Endothelial cell of umbilical vein (primary cell): ENCODE measurements at regions of chr3 and their contacts with region 1.

Region 1: GRCh38 chr3:13091898-13092611 is 18.8 kb upstream of the IQSEC1 start:
- DNase-seq: peak; percentile 72
- H3K4me3 ChIP-seq: no peak overlapping the region
- H3K27ac ChIP-seq: no peak overlapping the region
- H3K4me1 ChIP-seq: no peaks in the 10 kb centered on the region
- H3K27me3 ChIP-seq: peaks cover 3 to 6% of the 10 kb centered on the region in 2 experiments
- CTCF ChIP-seq: peak; percentile 66 to 95
- POLR2A ChIP-seq: no peak

Region 2: DNA sequence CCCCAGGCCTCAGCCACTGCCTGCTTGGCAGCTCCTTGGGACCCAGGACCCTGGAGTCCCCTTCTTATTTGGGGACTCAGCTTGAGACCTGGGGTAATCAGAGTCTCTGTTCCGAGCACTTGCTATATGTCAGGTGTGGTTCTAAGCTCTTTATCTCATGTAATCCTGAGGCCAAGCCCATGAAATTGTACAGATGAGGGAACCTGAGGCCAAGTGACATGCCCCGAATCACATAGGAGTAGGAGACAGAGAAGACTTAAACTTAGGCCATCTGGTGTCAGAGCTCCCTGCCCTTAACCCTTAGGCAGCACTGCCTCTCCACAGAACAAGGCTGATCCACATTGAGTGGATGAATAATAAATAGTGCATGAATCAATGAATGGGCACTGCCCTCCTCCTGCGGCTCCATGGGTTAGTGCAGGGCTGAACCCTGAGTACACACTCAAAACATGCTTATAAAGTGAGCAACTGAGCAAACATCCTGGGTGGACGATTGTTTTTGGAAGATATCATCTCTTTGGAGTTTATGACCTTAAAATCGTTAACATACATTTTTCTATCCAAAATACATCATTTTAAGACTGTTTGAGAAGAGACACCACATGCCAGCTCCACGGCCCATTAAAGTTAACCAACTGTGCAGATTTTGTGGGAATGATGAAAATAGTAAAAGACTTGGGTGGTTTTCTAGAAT is 14.4 kb after region 1 on chr3:
- CTCF ChIA-PET with region 1: interaction called, 27 read pairs
- POLR2A ChIA-PET with region 1: no interaction called
- dilution Hi-C with region 1: no loop called
- intact Hi-C with region 1: no loop called
- DNase-seq: no peak
- H3K4me3 ChIP-seq: no peak overlapping the region
- H3K27ac ChIP-seq: no peak overlapping the region
- H3K4me1 ChIP-seq: no peaks in the 10 kb centered on the region
- H3K27me3 ChIP-seq: no peaks in the 10 kb centered on the region
- CTCF ChIP-seq: no peak
- POLR2A ChIP-seq: no peak

Region 3: GRCh38 chr3:13461169-13462158 is 369.4 kb after region 1 on chr3:
- CTCF ChIA-PET with region 1: interaction called, 214 read pairs
- POLR2A ChIA-PET with region 1: no interaction called
- dilution Hi-C with region 1: loop called (anchors 25 kb)
- intact Hi-C with region 1: loop called (anchors 1 kb)
- DNase-seq: peak; percentile 61
- H3K4me3 ChIP-seq: no peak overlapping the region
- H3K27ac ChIP-seq: no peak overlapping the region
- H3K4me1 ChIP-seq: no peaks in the 10 kb centered on the region
- H3K27me3 ChIP-seq: no peaks in the 10 kb centered on the region
- CTCF ChIP-seq: peak; percentile 77 to 87
- POLR2A ChIP-seq: no peak

Region 4: DNA sequence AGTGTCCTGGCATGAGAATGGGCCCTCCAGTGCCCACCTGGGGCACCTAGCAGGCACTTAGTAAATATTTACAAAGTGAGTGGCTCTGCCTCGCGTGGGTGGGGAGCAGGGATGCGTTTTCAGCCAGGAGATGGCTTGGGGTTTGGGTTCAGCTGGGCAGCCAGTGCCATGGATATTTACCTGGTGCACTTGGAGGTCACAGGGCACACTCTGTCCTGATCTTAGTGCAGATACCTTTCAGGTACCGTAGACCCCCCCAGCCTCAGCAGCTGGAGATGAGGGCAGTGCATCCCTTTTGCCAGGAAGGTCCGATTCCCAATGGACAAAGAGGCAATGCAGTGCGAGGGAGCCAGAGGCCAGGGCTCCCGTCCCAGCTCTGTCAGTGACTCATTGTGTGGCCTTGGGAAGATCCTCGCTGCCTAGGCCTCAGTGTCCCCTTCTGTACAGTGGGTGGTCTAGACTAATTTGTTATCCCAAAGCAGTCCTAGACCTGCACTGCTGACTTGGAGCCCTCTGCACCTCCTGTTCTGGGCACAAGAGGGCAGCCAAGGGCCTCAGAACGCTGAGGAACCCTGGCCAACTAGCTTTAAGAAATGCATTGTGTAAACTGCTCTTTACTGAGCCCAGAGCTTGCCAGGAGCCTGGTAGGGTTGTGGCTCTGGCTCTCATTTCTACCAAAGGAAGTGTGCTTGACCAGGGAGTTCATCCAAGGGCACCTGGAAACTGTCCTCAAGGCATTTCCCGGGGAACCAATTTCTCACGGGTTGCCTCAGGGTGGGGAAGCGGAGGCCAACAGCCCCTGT is 404.1 kb after region 1 on chr3:
- CTCF ChIA-PET with region 1: interaction called, 19 read pairs
- POLR2A ChIA-PET with region 1: no interaction called
- dilution Hi-C with region 1: no loop called
- intact Hi-C with region 1: no loop called
- DNase-seq: peak; percentile 73
- H3K4me3 ChIP-seq: no peak overlapping the region
- H3K27ac ChIP-seq: no peak overlapping the region
- H3K4me1 ChIP-seq: no peaks in the 10 kb centered on the region
- H3K27me3 ChIP-seq: no peaks in the 10 kb centered on the region
- CTCF ChIP-seq: peak; percentile 87 to 89
- POLR2A ChIP-seq: no peak